ENCODE measurements at regions of chr2 and their contacts with region 1.

Region 1: GRCh38 chr2:12716282-12717190 is at the start of gene TRIB2:
- DNase-seq: peak; percentile 85 to 99 (median 92)
- ATAC-seq: peak; percentile 75
- H3K4me3 ChIP-seq: peak within 1 kb of the TSS; percentile 93
- H3K4me3 Mint-ChIP-seq: peak within 1 kb of the TSS; percentile 100
- H3K27ac ChIP-seq: peak within 1 kb of the TSS; percentile 68 to 88
- H3K27ac Mint-ChIP-seq: peak within 1 kb of the TSS; percentile 93
- H3K4me1 ChIP-seq: peaks cover 27% of the 10 kb centered on the region
- H3K4me1 Mint-ChIP-seq: peaks cover 49% of the 10 kb centered on the region
- H3K27me3 ChIP-seq: no peaks in the 10 kb centered on the region
- H3K27me3 Mint-ChIP-seq: no peaks in the 10 kb centered on the region
- CTCF ChIP-seq: peak; percentile 45
- total RNA-seq, gene TRIB2: 91.3 to 102 TPM

Region 2: DNA sequence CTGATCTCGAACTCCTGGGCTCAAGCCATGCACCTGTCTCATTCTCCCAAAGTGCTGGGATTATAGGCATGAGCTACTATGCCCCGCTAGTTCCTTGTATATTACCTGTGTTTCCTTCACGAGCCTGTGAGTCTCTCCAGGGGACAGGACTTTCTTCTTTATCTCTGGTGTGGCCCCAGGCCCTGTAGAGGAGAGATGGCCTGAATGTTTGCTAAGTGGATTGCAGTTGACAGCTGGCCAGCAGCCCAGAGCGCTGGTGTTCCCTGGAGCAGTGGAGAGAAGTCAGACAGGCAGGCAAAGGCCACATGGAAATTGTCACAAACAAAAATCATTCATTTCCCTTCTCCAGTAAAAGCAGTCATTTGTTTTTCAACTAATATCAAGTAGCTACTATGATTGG is 952.2 kb before region 1 on chr2:
- CTCF ChIA-PET with region 1: no interaction called
- POLR2A ChIA-PET with region 1: no interaction called
- intact Hi-C with region 1: no loop called
- DNase-seq: no peak
- ATAC-seq: no peak
- H3K4me3 ChIP-seq: no peak overlapping the region
- H3K4me3 Mint-ChIP-seq: no peak overlapping the region
- H3K27ac ChIP-seq: no peak overlapping the region
- H3K27ac Mint-ChIP-seq: no peak overlapping the region
- H3K4me1 ChIP-seq: peaks cover 17% of the 10 kb centered on the region
- H3K4me1 Mint-ChIP-seq: peaks cover 30% of the 10 kb centered on the region
- H3K27me3 ChIP-seq: no peaks in the 10 kb centered on the region
- H3K27me3 Mint-ChIP-seq: no peaks in the 10 kb centered on the region
- CTCF ChIP-seq: no peak

Region 3: DNA sequence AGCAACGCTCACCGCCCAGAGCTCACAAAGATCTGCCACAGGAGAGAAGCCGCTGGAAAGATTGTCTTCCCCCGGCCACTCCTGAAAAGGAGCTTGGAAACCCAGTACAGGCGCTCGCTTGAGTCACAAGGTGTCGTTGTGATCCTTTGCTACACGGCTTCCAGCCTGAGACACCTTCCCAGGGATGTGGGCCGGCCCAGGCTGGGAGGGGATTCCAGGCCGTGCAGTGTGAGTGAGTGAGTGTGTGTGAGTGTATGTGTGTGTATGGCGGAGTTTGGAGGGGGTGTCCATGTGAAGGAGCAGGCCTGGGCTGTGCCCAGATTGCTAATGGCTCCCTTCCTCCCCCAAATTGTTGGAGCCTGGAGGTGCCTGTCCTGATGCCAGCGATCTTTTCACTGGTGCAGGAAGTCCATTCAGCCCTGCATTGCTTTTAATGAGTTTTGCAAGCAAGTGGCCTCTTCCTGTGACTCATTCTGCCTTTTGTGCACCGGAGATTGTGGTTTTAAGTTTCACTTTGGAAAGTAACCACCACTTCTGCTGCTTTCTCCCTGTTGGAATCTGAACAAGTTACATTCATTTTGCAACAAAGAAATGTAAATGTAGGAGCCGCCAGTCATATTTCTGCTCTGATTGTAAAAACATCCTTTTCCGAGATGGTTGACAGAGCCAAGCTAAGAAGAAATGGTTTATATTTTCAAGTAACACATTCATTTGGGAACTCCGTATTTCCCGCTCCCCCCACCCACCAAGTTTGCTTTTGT is 886.4 kb before region 1 on chr2:
- CTCF ChIA-PET with region 1: interaction called, 3 read pairs
- POLR2A ChIA-PET with region 1: interaction called, 9 read pairs
- intact Hi-C with region 1: loop called (anchors 2 kb)
- DNase-seq: peak; percentile 4 to 85 (median 32)
- ATAC-seq: peak; percentile 77
- H3K4me3 ChIP-seq: peak overlapping the region; percentile 42
- H3K4me3 Mint-ChIP-seq: peak overlapping the region; percentile 82
- H3K27ac ChIP-seq: peak overlapping the region in 1 of 2 donors; percentile 6
- H3K27ac Mint-ChIP-seq: peak overlapping the region; percentile 34
- H3K4me1 ChIP-seq: peaks cover 20% of the 10 kb centered on the region
- H3K4me1 Mint-ChIP-seq: peaks cover 37% of the 10 kb centered on the region
- H3K27me3 ChIP-seq: no peaks in the 10 kb centered on the region
- H3K27me3 Mint-ChIP-seq: no peaks in the 10 kb centered on the region
- CTCF ChIP-seq: no peak

Region 4: DNA sequence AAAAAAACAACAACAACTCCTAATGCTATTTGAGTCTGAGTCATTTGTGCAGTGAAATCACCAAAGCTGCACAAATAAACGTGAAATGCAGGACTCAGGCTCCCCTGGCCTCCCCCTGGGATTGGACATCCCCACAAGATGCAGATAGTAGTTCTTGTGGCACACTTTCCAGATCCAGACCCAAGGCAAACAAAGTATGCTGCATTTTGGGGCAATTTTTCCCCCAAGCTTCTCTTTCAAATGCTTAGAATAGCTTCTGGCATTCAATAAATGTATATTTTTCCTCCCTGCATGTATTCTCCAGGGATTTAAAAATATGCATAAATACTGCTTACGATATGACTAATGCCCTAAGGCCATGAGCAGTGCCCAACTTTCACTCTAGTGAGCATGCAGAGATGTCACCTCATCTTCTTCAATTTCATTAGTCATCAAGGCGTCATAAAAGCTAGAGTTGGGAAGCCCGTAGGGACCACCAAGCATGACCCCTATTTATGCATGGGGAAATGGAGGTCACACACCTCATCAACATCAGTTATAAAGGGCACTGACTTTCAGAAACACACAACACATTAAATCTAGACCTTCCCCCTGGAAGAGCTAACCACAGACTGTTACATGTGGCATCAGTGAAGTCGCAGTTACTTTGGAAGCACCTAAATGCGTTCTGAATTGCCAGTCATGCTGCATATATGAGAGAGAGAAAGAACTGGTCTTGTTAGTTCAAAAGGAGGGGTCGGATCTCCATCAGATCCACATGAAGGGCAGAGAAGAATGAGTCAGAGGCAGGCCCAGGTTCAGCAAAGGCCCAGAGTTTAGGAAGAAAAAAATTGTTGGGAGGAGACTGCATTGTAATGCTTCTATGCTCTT is 596.0 kb before region 1 on chr2:
- CTCF ChIA-PET with region 1: interaction called, 3 read pairs
- POLR2A ChIA-PET with region 1: no interaction called
- intact Hi-C with region 1: loop called in 1 of 2 experiments (anchors 10 kb)
- DNase-seq: no peak
- ATAC-seq: no peak
- H3K4me3 ChIP-seq: no peak overlapping the region
- H3K4me3 Mint-ChIP-seq: no peak overlapping the region
- H3K27ac ChIP-seq: no peak overlapping the region
- H3K27ac Mint-ChIP-seq: no peak overlapping the region
- H3K4me1 ChIP-seq: peaks cover 7% of the 10 kb centered on the region
- H3K4me1 Mint-ChIP-seq: no peaks in the 10 kb centered on the region
- H3K27me3 ChIP-seq: no peaks in the 10 kb centered on the region
- H3K27me3 Mint-ChIP-seq: no peaks in the 10 kb centered on the region
- CTCF ChIP-seq: no peak

Region 5: DNA sequence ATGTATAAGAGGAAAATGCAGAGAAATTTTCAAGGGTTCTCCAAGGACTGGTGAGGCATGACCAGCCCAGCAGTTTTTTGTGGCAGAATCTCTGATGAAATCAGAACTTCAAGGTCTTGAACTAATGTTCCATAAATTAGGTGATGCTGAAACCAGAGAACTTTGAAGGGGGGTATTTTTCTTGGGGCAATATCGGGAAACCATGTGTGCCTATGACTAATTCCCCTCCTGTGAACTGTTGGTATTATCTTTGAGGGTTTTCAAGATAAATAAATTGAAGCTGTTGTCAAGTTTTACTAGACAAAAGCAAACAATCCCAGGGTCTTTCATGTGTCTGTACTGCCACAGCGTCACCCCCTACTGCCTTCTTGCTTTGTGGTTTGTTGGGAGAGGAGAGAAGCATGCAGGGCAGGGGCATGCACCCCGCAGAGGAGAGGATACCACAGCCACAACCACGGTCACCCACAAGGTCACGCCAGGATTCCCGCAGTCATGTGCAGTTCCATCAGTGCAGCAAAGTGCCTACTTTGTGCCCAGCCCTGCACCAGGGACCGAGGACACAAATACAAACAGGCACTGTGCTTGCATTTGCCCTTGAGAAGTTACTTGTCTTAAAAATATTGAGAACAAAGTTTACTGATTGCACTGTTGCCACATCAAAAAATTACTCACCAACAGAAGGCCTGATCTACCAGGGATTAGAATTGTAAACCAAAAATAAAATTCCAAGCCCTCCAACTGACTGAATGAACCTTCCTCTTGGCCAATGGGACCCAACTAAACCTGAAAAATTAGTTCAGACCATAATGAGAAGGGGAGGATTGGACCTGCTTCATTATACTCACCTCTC is 413.1 kb before region 1 on chr2:
- CTCF ChIA-PET with region 1: no interaction called
- POLR2A ChIA-PET with region 1: interaction called, 10 read pairs
- intact Hi-C with region 1: no loop called
- DNase-seq: peak in 7 of 14 experiments; percentile 3 to 34 (median 9)
- ATAC-seq: peak; percentile 53
- H3K4me3 ChIP-seq: no peak overlapping the region
- H3K4me3 Mint-ChIP-seq: no peak overlapping the region
- H3K27ac ChIP-seq: no peak overlapping the region
- H3K27ac Mint-ChIP-seq: peak overlapping the region; percentile 41
- H3K4me1 ChIP-seq: peaks cover 27% of the 10 kb centered on the region
- H3K4me1 Mint-ChIP-seq: peaks cover 45% of the 10 kb centered on the region
- H3K27me3 ChIP-seq: no peaks in the 10 kb centered on the region
- H3K27me3 Mint-ChIP-seq: no peaks in the 10 kb centered on the region
- CTCF ChIP-seq: no peak

Region 6: DNA sequence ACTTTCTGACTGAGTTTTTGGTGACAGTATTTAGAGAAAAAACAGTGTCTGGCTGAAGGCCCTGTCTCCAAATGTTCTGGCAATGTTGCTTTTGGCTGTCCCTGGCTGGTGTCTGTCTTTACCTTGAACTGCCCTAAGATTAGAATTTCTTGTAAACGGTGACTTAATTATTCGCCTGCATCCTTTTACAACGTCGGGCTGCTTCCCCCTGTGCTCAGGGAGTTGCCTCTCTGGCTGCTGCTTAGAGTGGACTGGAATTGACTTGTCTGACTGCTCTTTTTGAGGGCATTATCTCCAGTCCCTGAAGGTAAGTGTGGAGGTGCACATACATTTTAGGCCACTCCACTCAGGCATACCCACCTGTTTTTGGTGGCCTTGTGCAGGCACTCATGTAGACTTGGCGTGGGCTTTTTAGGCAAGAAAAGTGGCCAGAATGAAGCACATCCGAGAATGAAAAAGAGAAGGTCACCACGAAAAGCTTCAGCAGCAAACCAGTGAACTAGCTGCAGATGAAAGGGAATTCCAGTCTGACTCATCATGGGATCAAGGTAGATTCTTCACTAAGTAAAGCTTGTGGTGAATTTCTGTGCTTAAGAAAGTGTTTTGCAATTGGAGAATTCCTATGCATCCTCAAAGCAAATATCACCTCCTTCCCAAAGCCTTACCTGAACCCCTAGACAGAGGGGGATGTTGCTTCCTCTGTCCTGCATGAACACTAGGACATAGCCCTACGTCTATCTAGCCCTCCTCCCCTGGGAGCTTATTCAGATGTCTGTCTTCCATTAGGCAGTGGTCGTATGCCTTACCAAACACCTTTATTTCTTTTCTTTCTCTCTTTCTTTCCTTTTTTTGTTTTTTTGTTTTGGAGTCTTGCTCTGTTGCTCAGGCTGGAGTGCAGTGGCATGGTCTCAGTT is 230.1 kb before region 1 on chr2:
- CTCF ChIA-PET with region 1: interaction called, 3 read pairs
- POLR2A ChIA-PET with region 1: interaction called, 16 read pairs
- intact Hi-C with region 1: no loop called
- DNase-seq: no peak
- ATAC-seq: no peak
- H3K4me3 ChIP-seq: no peak overlapping the region
- H3K4me3 Mint-ChIP-seq: no peak overlapping the region
- H3K27ac ChIP-seq: peak overlapping the region in 1 of 2 donors; percentile 68
- H3K27ac Mint-ChIP-seq: peak overlapping the region; percentile 83
- H3K4me1 ChIP-seq: peaks cover 53% of the 10 kb centered on the region
- H3K4me1 Mint-ChIP-seq: peaks cover 71% of the 10 kb centered on the region
- H3K27me3 ChIP-seq: no peaks in the 10 kb centered on the region
- H3K27me3 Mint-ChIP-seq: no peaks in the 10 kb centered on the region
- CTCF ChIP-seq: no peak

Region 7: GRCh38 chr2:12733846-12734245 is 17.3 kb after region 1 on chr2:
- CTCF ChIA-PET with region 1: interaction called, 26 read pairs
- POLR2A ChIA-PET with region 1: interaction called, 73 read pairs
- intact Hi-C with region 1: no loop called
- DNase-seq: no peak
- ATAC-seq: no peak
- H3K4me3 ChIP-seq: no peak overlapping the region
- H3K4me3 Mint-ChIP-seq: no peak overlapping the region
- H3K27ac ChIP-seq: no peak overlapping the region
- H3K27ac Mint-ChIP-seq: peak overlapping the region; percentile 81
- H3K4me1 ChIP-seq: peaks cover 69% of the 10 kb centered on the region
- H3K4me1 Mint-ChIP-seq: peaks cover 91% of the 10 kb centered on the region
- H3K27me3 ChIP-seq: no peaks in the 10 kb centered on the region
- H3K27me3 Mint-ChIP-seq: no peaks in the 10 kb centered on the region
- CTCF ChIP-seq: no peak

Region 8: DNA sequence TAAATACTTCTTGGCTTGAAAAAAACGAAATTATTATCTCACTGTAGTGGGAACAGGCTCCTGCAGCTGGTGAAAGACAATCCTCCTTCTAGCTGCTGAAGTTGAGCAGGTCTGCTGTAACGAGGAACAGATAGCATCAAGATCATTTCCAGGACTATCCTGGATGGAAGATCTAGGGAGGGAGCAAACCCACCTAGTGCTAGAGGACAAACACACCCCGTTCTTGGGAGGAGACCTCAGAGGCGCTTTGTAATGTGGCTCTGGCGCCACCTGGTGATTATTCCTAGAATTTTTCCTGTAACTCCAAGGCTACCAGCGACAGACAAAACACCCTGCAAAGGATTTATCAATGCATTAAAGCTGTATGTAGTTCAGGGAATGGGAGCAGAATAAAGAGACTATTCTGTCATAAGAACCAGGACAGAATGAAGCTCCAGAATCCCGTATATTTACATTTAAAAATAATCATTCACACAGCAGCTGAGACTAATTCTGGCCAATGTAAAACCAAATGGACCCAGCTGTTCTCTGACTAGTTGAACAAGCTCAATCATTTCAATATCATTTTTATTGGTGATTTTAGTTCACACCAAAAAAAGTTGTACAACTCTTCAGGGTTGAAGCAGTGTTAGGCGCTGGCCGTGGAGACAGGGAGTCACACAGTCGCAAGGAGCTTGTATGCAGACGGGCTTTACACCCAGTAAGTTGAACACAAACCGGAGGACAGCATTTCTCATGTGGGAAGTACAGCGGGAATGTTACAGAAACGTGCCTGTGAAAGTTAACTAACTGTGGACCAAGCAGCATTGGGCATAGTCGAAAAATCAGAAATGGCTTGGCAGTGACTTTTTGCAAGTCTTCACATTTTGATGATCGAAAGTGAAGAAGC is 290.5 kb after region 1 on chr2:
- CTCF ChIA-PET with region 1: interaction called, 4 read pairs
- POLR2A ChIA-PET with region 1: no interaction called
- intact Hi-C with region 1: loop called (anchors 5 kb)
- DNase-seq: peak; percentile 40 to 80 (median 56)
- ATAC-seq: peak; percentile 59
- H3K4me3 ChIP-seq: no peak overlapping the region
- H3K4me3 Mint-ChIP-seq: no peak overlapping the region
- H3K27ac ChIP-seq: no peak overlapping the region
- H3K27ac Mint-ChIP-seq: no peak overlapping the region
- H3K4me1 ChIP-seq: no peaks in the 10 kb centered on the region
- H3K4me1 Mint-ChIP-seq: peaks cover 5% of the 10 kb centered on the region
- H3K27me3 ChIP-seq: peaks cover 0 to 4% of the 10 kb centered on the region in 2 experiments
- H3K27me3 Mint-ChIP-seq: peaks cover 6% of the 10 kb centered on the region
- CTCF ChIP-seq: peak; percentile 96

Region 9: DNA sequence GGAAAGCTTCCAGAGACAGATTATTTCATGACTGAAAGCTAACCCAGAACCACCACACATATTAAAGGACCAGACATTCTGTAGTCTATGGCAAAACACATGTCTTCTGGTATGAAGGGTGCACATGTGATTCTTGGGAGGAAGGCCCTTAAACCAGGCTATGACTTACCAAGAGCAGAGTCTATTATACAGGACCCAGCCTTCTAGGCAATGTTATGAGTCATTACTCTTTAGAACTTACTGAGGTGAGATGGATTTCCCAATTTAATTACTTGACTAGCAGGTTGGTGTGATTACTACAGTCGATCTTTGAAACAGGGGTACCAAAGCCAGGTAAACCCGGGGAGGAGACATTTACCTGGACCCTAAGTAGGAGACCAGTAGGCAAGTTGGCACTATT is 351.0 kb after region 1 on chr2:
- CTCF ChIA-PET with region 1: no interaction called
- POLR2A ChIA-PET with region 1: no interaction called
- intact Hi-C with region 1: no loop called
- DNase-seq: no peak
- ATAC-seq: no peak
- H3K4me3 ChIP-seq: no peak overlapping the region
- H3K4me3 Mint-ChIP-seq: no peak overlapping the region
- H3K27ac ChIP-seq: no peak overlapping the region
- H3K27ac Mint-ChIP-seq: no peak overlapping the region
- H3K4me1 ChIP-seq: no peaks in the 10 kb centered on the region
- H3K4me1 Mint-ChIP-seq: no peaks in the 10 kb centered on the region
- H3K27me3 ChIP-seq: peaks cover 5 to 10% of the 10 kb centered on the region in 2 experiments
- H3K27me3 Mint-ChIP-seq: peaks cover 47% of the 10 kb centered on the region
- CTCF ChIP-seq: no peak

Measured in CD4-positive, alpha-beta T cell (primary cell).